Right ventricle myocardium inferior (tissue), 1 donor: ENCODE measurements at regions of chr17 and their contacts with region 1.

Region 1: GRCh38 chr17:50681263-50682210 is 26.2 kb downstream of the ANKRD40 start:
- DNase-seq: peak; percentile 61
- ATAC-seq: peak; percentile 48

Region 2: GRCh38 chr17:50626037-50626574 is 55.4 kb before region 1 on chr17:
- intact Hi-C with region 1: loop called (anchors 2 kb)
- DNase-seq: peak; percentile 84
- ATAC-seq: peak; percentile 80